Activated CD4-positive, alpha-beta T cell treated with anti-CD3 and anti-CD28 coated beads, Interleukin-2, amount 10 ng/mL, durations not matched to agents 24 days and 14 days (primary cell): ENCODE measurements at regions of chr19 and their contacts with region 1.

Region 1: DNA sequence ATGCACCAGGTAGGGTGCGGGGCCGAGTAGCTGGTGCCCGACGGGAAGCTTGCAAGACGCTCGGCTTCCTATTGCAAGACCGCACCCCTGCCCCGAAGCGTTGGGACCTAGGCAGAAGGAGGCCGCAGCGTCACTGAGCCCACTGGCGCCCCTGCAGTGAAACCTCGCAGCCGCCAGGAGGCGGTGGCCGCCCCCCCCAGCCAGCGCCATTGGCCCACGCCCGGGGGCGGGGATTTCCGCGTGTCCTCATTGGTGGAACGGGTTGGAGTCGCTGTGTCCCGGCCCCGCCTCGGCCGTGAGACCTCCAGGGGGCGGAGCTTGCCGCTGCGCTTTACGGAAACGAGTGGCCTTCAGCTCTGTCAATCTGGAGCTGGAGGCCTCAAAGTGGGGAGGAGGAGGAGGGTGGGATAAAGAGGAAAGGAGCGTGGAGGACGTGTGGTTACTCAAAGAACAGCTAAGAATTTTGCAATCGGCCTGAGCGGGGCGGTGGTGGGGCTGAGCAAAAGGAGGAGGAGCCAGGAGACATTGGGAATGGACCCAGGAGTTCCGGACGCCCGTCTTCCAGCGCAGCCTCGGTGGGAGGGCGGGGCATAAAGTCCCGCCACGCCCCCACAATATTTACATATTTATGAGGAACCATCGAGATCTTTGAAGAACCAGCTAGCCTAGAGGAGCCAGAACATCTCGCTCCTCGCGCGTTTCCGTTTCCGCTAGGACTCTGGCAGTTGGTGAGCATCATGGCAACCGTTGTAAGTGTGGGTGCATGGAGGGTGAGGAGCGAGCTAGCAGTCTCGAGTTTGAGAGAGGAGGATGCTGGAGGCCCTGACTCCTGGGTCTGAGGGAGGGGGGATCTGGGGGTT is at the starts of genes GYS1 and RUVBL2:
- DNase-seq: peak; percentile 100
- H3K4me3 Mint-ChIP-seq: peak within 1 kb of the TSS; percentile 92
- H3K27ac Mint-ChIP-seq: peak within 1 kb of the TSS; percentile 97
- H3K4me1 Mint-ChIP-seq: peaks cover 40% of the 10 kb centered on the region
- H3K27me3 Mint-ChIP-seq: no peaks in the 10 kb centered on the region
- total RNA-seq, gene GYS1: 73.8 and 77.8 TPM in 2 replicates
- total RNA-seq, gene RUVBL2: 190 and 195 TPM in 2 replicates

Region 2: DNA sequence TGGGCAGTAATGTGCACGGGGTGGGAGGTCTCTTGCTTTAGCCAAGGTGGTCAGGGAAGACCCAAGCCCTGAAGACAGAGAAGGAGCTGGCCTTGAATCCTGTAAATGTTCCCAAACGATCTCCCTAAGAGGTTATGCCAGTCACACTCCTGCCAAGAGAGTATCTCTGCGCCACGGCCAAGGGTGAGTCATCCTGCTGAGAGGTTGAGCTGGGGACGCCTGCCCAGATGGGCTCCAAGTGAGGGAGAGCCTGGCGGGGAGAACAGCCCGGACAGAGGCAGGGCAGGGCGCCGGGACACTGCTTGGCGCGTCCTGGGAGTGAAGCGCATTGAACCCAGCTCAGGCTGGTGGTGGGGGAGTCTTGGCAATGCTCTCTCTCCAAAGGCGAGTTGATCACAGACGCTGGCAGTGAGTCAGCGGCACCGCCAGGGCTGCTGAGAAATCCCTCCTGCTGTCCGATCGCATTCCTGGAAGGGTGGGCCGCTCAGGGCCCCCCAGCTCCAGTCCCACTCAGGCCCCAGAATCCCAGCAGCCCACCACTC is 425.0 kb before region 1 on chr19:
- intact Hi-C with region 1: no loop called
- DNase-seq: no peak
- H3K4me3 Mint-ChIP-seq: no peak overlapping the region
- H3K27ac Mint-ChIP-seq: no peak overlapping the region
- H3K4me1 Mint-ChIP-seq: no peaks in the 10 kb centered on the region
- H3K27me3 Mint-ChIP-seq: no peaks in the 10 kb centered on the region

Region 3: GRCh38 chr19:48872182-48872883 is 121.1 kb before region 1 on chr19 and contains the start of gene PPP1R15A:
- intact Hi-C with region 1: loop called (anchors 1 kb)
- DNase-seq: peak; percentile 100
- H3K4me3 Mint-ChIP-seq: peak within 1 kb of the TSS; percentile 100
- H3K27ac Mint-ChIP-seq: peak within 1 kb of the TSS; percentile 100
- H3K4me1 Mint-ChIP-seq: peaks cover 39% of the 10 kb centered on the region
- H3K27me3 Mint-ChIP-seq: peaks cover 5% of the 10 kb centered on the region
- total RNA-seq, gene PPP1R15A: 40.5 and 42.1 TPM in 2 replicates

Region 4: DNA sequence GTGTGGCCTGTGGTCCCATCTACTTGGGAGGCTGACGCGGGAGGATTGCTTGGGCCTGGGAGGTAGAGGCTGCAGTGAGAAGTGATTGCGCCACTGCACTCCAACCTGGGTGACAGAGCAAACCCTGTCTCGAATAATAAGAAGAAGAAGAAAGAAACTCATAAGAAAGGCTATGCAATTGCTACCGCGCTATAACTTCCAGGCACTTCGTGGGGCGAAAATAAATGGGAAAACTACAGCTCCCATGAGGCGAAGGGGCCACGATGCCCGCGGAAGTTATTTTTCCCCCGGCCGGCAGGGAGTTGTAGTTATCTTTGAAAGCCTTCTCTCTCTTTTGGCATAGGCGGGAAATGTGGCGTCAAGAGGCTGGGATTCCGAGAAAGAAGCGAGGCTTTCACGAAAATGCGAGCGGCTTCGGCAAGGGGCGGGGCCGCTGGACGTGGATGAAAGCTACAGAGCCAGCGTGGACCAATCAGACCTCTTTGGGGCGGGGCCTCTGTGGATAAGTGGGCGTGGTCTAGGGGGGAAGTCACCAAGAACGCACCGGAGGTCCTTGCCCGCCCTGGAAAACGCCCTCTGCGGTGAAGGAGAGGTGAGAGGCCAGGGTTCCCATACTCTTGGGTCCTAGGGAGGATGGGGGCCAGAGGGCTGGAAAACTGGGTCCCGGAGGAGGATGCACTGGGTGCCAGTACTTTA is 93.5 kb before region 1 on chr19 and contains the start of gene NUCB1:
- intact Hi-C with region 1: loop called (anchors 1 kb)
- DNase-seq: peak; percentile 100
- H3K4me3 Mint-ChIP-seq: peak within 1 kb of the TSS; percentile 98
- H3K27ac Mint-ChIP-seq: peak within 1 kb of the TSS; percentile 95
- H3K4me1 Mint-ChIP-seq: peaks cover 26% of the 10 kb centered on the region
- H3K27me3 Mint-ChIP-seq: peaks cover 4% of the 10 kb centered on the region
- total RNA-seq, gene NUCB1: 116 and 117 TPM in 2 replicates

Region 5: DNA sequence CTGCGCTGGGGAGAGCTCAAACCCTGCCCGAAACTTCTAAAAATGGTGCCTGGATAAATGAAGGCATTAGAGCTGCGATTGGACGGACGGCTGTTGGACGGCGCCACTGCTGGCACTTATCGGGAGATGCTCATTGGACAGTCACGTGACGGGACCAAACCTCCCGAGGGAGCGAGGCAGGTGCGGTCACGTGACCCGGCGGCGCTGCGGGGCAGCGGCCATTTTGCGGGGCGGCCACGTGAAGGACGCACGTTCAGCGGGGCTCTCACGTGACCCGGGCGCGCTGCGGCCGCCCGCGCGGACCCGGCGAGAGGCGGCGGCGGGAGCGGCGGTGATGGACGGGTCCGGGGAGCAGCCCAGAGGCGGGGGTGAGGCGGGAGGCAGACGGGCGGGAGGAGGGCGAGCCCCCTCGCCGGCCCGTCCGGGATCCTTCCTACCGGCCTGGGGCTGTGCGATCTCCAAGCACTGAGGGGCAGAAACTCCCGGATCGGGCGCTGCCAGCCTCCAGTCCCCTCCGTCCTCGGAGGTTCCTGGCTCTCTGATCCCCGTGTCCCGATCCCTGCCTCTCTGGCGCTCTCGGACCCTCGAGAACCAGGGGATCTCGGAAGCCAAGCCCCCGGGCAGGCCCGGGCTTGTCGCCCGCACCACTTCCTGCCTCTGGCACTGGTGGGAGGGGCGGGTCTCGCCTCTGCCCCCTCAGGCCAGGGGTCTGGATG is 38.7 kb before region 1 on chr19 and contains the start of gene BAX:
- intact Hi-C with region 1: loop called (anchors 2 kb)
- DNase-seq: peak; percentile 98
- H3K4me3 Mint-ChIP-seq: peak within 1 kb of the TSS; percentile 86
- H3K27ac Mint-ChIP-seq: peak within 1 kb of the TSS; percentile 93
- H3K4me1 Mint-ChIP-seq: peaks cover 25% of the 10 kb centered on the region
- H3K27me3 Mint-ChIP-seq: no peaks in the 10 kb centered on the region
- total RNA-seq, gene BAX: 257 and 298 TPM in 2 replicates

Region 6: GRCh38 chr19:48965040-48965805 is 28.2 kb before region 1 on chr19 and contains the start of gene FTL:
- intact Hi-C with region 1: loop called (anchors 1 kb)
- DNase-seq: peak; percentile 98
- H3K4me3 Mint-ChIP-seq: peak within 1 kb of the TSS; percentile 100
- H3K27ac Mint-ChIP-seq: peak within 1 kb of the TSS; percentile 99
- H3K4me1 Mint-ChIP-seq: peaks cover 58% of the 10 kb centered on the region
- H3K27me3 Mint-ChIP-seq: no peaks in the 10 kb centered on the region
- total RNA-seq, gene FTL: 696 and 697 TPM in 2 replicates

Region 7: GRCh38 chr19:48975947-48976847 is 17.2 kb before region 1 on chr19:
- intact Hi-C with region 1: loop called (anchors 2 kb)
- DNase-seq: peak; percentile 81
- H3K4me3 Mint-ChIP-seq: no peak overlapping the region
- H3K27ac Mint-ChIP-seq: no peak overlapping the region
- H3K4me1 Mint-ChIP-seq: peaks cover 7% of the 10 kb centered on the region
- H3K27me3 Mint-ChIP-seq: no peaks in the 10 kb centered on the region

Region 8: DNA sequence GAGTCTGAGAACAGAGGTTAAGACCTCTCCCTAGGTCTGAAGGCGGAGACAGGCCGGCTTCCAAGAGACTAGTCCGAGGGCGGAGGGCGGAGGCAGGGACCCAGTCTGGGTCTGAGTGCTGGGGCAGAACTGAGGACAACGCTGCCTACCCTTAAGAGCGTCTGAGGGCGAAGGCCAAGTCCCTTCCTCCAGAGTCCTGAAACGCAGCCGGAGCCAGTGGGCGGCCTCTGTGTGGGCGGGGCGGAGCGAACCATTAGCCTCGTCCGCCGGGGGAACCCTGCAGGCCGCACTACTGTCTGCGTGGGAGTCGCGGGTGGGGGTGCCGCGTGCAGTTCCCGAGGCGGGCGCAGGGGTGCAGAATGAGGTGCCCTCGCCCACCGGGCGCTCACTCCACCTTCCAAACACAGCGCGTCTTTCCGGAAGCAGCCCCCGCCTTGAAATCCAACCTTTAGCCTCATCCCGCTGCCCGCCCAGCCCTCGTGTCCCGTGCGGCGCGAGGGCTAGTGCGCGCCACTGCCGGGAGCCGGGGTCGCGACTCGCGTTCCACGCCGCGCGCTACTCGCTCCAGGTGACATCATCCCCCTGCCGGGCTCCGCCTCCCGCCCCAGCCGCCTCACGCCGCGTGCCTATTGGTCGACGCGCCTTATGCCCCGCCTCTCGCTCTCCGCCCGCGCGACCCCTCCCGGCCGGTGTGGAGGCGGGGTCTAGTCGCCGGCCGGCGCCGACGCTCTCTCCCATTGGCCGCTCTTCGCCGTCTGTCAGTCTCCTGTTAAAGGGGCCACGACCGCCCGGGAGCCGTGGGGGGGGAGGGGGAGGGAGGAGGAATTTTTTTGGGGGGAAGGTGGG is 125.4 kb after region 1 on chr19 and contains the start of gene C19orf73:
- intact Hi-C with region 1: loop called (anchors 2 kb)
- DNase-seq: peak; percentile 99
- H3K4me3 Mint-ChIP-seq: peak within 1 kb of the TSS; percentile 90
- H3K27ac Mint-ChIP-seq: peak within 1 kb of the TSS; percentile 90
- H3K4me1 Mint-ChIP-seq: peaks cover 25% of the 10 kb centered on the region
- H3K27me3 Mint-ChIP-seq: peaks cover 18% of the 10 kb centered on the region
- total RNA-seq, gene C19orf73: 2.0 and 2.5 TPM in 2 replicates